ENCODE measurements at regions of chr7 and their contacts with region 1.

Region 1: DNA sequence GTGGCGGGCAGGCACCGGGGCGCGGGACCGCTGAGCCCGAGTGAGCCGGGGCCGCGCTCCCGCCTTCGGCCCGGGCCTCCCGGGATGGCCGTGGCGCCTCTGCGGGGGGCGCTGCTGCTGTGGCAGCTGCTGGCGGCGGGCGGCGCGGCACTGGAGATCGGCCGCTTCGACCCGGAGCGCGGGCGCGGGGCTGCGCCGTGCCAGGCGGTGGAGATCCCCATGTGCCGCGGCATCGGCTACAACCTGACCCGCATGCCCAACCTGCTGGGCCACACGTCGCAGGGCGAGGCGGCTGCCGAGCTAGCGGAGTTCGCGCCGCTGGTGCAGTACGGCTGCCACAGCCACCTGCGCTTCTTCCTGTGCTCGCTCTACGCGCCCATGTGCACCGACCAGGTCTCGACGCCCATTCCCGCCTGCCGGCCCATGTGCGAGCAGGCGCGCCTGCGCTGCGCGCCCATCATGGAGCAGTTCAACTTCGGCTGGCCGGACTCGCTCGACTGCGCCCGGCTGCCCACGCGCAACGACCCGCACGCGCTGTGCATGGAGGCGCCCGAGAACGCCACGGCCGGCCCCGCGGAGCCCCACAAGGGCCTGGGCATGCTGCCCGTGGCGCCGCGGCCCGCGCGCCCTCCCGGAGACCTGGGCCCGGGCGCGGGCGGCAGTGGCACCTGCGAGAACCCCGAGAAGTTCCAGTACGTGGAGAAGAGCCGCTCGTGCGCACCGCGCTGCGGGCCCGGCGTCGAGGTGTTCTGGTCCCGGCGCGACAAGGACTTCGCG is 534 bp downstream of the FZD9 start:
- DNase-seq: no peak
- H3K4me3 ChIP-seq: peak overlapping the region in 1 of 3 experiments; percentile 32
- H3K27ac ChIP-seq: no peak overlapping the region
- H3K4me1 ChIP-seq: no peaks in the 10 kb centered on the region
- H3K27me3 ChIP-seq: peaks cover 0 to 2% of the 10 kb centered on the region in 2 experiments
- CTCF ChIP-seq: no peak
- POLR2A ChIP-seq: no peak

Region 2: DNA sequence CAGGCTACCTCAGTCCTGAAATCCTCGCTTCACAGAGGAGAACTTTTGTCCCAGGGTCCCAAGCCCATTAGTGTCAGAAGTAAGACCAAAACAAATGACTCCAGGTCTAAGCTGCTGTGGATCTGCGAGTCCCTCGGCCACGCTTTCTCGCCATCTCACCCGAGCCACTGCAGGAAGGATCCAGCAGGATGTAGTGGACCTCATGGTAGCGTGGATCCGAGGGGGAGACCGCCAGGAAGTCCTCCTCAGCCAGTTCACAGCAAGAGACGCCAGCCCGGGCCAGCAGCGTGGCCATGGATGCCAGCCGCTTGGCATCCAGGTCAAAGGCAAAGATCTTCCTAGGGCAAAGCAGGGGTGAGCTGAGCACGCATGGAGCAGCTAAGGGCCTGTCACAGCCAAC is 130.0 kb before region 1 on chr7:
- CTCF ChIA-PET with region 1: no interaction called
- POLR2A ChIA-PET with region 1: no interaction called
- dilution Hi-C with region 1: no loop called
- intact Hi-C with region 1: no loop called
- DNase-seq: no peak
- H3K4me3 ChIP-seq: no peak overlapping the region
- H3K27ac ChIP-seq: no peak overlapping the region
- H3K4me1 ChIP-seq: no peaks in the 10 kb centered on the region
- H3K27me3 ChIP-seq: no peaks in the 10 kb centered on the region
- CTCF ChIP-seq: no peak
- POLR2A ChIP-seq: no peak

Region 3: DNA sequence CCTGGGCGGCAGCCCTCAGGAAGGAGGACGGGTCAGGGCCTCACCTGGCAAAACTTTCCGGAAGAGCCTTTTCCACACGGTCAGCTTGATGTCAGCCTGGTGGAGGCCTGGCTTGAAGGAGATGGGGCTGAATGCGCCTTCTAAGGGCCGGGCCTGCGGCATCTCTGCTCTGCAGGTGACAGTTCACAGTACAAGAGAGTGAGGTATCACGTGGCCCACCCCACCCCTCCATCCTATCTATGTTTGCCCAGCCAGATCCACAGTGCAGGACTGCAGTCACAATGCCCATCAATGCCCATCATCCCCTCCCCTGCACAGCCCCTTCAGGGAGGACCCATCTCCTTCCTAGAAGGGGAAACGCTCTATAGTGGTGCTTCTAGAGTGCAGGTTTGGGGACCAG is 117.6 kb before region 1 on chr7:
- CTCF ChIA-PET with region 1: no interaction called
- POLR2A ChIA-PET with region 1: interaction called, 3 read pairs
- dilution Hi-C with region 1: no loop called
- intact Hi-C with region 1: loop called (anchors 5 kb)
- DNase-seq: no peak
- H3K4me3 ChIP-seq: no peak overlapping the region
- H3K27ac ChIP-seq: no peak overlapping the region
- H3K4me1 ChIP-seq: no peaks in the 10 kb centered on the region
- H3K27me3 ChIP-seq: no peaks in the 10 kb centered on the region
- CTCF ChIP-seq: no peak
- POLR2A ChIP-seq: no peak

Region 4: GRCh38 chr7:73358590-73359275 is 75.4 kb before region 1 on chr7:
- CTCF ChIA-PET with region 1: no interaction called
- POLR2A ChIA-PET with region 1: no interaction called
- dilution Hi-C with region 1: no loop called
- intact Hi-C with region 1: loop called (anchors 2 kb)
- DNase-seq: no peak
- H3K4me3 ChIP-seq: peak overlapping the region in 1 of 3 experiments; percentile 21
- H3K27ac ChIP-seq: peak overlapping the region; percentile 30
- H3K4me1 ChIP-seq: peaks cover 10% of the 10 kb centered on the region
- H3K27me3 ChIP-seq: no peaks in the 10 kb centered on the region
- CTCF ChIP-seq: no peak
- POLR2A ChIP-seq: no peak

Region 5: GRCh38 chr7:73397521-73398281 is 36.4 kb before region 1 on chr7:
- CTCF ChIA-PET with region 1: no interaction called
- POLR2A ChIA-PET with region 1: no interaction called
- dilution Hi-C with region 1: no loop called
- intact Hi-C with region 1: no loop called
- DNase-seq: no peak
- H3K4me3 ChIP-seq: no peak overlapping the region
- H3K27ac ChIP-seq: no peak overlapping the region
- H3K4me1 ChIP-seq: no peaks in the 10 kb centered on the region
- H3K27me3 ChIP-seq: no peaks in the 10 kb centered on the region
- CTCF ChIP-seq: no peak
- POLR2A ChIP-seq: no peak

Region 6: GRCh38 chr7:73461782-73462285 is 27.7 kb after region 1 on chr7:
- CTCF ChIA-PET with region 1: no interaction called
- POLR2A ChIA-PET with region 1: no interaction called
- dilution Hi-C with region 1: no loop called
- intact Hi-C with region 1: no loop called
- DNase-seq: no peak
- H3K4me3 ChIP-seq: no peak overlapping the region
- H3K27ac ChIP-seq: no peak overlapping the region
- H3K4me1 ChIP-seq: no peaks in the 10 kb centered on the region
- H3K27me3 ChIP-seq: no peaks in the 10 kb centered on the region
- CTCF ChIP-seq: no peak
- POLR2A ChIP-seq: no peak